ENCODE measurements at regions of chr3 and their contacts with region 1.

Region 1: DNA sequence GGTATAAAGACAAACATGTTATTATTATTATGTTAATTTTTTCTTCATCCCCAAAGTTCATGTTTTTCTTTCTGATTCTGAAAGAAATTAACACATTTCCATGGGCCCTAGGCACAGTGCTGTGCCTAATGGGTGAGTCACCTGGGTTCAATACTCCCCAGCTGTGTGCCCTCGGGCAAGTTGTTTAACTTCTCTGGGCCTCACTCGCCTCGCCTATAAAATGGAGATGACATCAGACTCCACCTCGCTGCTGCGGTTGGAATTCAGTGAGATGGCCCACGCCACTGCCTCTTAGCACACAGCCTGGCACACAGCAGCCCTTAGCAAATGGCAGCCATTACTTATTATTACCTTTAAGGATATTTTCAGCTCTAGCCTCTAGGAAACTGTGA is 22.6 kb downstream of the DNASE1L3 start:
- DNase-seq: no peak
- H3K4me3 ChIP-seq: no peak overlapping the region
- H3K4me3 Mint-ChIP-seq: no peak overlapping the region
- H3K27ac Mint-ChIP-seq: no peak overlapping the region
- H3K4me1 ChIP-seq: peaks cover 8% of the 10 kb centered on the region
- H3K4me1 Mint-ChIP-seq: peaks cover 11% of the 10 kb centered on the region
- H3K27me3 ChIP-seq: no peaks in the 10 kb centered on the region
- H3K27me3 Mint-ChIP-seq: no peaks in the 10 kb centered on the region
- CTCF ChIP-seq: no peak

Region 2: DNA sequence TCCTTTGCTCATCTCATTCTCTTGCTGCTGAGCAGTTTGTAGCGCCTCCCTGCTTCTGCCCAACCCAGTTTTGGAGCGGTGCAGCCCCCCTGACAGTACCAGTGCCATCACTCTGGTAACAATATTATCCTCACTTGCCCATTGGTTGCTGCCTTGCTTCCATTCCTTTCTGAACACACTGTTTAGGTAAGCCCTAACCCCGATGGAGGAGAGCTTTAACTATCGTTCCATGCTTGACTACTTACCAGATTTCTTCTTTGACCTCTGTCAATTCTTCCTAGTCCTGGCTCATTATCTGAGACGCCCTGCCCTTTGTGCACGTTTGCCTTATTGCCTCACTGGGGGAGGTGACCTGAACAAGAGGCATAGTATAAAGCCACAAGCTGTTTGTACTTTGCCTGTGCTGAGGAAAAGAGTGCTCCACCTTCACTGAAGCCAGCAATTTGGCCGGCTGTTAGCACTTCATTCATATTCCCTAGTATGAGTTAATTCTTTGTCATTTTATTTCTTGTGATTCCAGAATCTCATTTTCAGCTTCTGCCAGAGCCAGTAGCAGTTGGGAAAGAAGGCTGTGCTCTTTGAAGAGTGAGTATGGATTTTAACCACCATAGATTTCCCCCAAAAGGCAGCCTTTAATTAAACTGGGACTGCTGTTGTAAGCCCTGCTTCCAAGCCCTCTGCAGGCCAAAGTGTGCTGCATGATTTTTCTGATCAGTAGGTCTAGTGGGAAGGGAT is 61.4 kb after region 1 on chr3:
- CTCF ChIA-PET with region 1: interaction called, 6 read pairs
- POLR2A ChIA-PET with region 1: no interaction called
- intact Hi-C with region 1: loop called (anchors 1 kb)
- DNase-seq: peak; percentile 65 to 74
- H3K4me3 ChIP-seq: no peak overlapping the region
- H3K4me3 Mint-ChIP-seq: peak overlapping the region; percentile 61
- H3K27ac Mint-ChIP-seq: peak overlapping the region; percentile 89
- H3K4me1 ChIP-seq: peaks cover 39% of the 10 kb centered on the region
- H3K4me1 Mint-ChIP-seq: peaks cover 40% of the 10 kb centered on the region
- H3K27me3 ChIP-seq: no peaks in the 10 kb centered on the region
- H3K27me3 Mint-ChIP-seq: no peaks in the 10 kb centered on the region
- CTCF ChIP-seq: peak; percentile 17 to 33

Region 3: DNA sequence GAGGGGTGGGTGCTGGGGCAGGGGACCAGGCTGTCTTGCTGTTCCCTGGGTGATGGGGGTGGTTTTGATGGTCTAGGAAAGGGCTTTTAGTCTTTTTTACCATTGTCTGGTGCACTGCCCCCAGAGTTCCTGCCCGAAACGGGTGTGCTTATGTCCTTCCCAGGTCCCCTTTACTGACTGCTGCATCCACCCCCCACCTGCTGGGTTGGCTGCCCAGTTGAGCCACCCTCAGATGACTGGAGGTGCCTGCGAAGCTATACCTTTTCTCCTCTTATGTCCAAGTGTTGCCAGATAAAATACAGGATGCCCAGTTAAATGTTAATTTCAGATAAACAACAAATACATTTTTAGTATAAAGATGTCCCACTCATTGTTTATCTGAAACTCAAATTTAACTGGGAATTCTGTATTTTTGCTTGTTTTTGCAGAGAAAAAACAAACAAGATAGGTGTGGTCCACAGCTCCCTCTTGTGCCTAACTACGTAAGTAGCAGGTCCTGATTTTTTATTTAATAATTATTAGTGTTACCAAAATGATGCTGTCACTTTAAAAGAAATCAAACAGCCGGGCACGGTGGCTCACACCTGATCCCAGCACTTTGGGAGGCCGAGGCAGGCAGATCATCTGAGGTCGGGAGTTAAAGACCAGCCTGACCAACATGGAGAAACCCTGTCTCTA is 111.8 kb after region 1 on chr3:
- CTCF ChIA-PET with region 1: interaction called, 41 read pairs
- POLR2A ChIA-PET with region 1: no interaction called
- intact Hi-C with region 1: loop called (anchors 1 kb)
- DNase-seq: peak in 1 of 2 experiments; percentile 17
- H3K4me3 ChIP-seq: no peak overlapping the region
- H3K4me3 Mint-ChIP-seq: no peak overlapping the region
- H3K27ac Mint-ChIP-seq: no peak overlapping the region
- H3K4me1 ChIP-seq: no peaks in the 10 kb centered on the region
- H3K4me1 Mint-ChIP-seq: no peaks in the 10 kb centered on the region
- H3K27me3 ChIP-seq: no peaks in the 10 kb centered on the region
- H3K27me3 Mint-ChIP-seq: no peaks in the 10 kb centered on the region
- CTCF ChIP-seq: peak; percentile 30 to 69

Region 4: DNA sequence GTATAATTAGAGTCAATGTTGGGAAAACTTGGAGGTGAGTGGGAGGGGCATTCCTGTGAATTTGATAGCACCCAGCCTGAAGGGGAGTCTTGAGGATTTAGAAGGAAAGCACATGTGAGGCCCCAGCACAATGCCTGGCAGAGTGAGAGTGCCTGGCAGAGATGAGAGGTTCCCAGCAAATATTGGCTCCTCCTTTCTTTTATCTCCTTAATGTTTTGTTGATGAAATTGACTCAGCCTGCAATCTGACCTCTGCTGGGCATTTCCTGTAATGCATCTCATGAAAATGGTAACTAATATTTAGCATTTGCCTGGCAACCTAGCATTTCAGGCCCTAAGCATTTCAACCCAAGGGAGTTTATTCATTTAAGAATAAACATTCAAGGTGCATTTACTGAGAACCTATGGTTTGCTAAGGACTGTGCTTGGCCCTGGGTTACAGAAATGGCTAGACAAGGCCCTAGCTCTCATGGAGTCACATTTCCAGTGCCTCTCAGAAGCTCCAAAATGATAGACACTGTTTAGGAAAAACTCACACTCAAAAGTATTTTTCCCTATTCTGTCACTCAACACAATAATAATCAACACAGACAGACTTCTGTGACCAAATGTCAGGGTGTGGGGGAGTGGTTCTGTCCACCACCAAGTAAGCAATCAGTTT is 226.5 kb after region 1 on chr3:
- CTCF ChIA-PET with region 1: interaction called, 5 read pairs
- POLR2A ChIA-PET with region 1: no interaction called
- intact Hi-C with region 1: loop called (anchors 1 kb)
- DNase-seq: peak in 1 of 2 experiments; percentile 54
- H3K4me3 ChIP-seq: no peak overlapping the region
- H3K4me3 Mint-ChIP-seq: no peak overlapping the region
- H3K27ac Mint-ChIP-seq: no peak overlapping the region
- H3K4me1 ChIP-seq: peaks cover 44% of the 10 kb centered on the region
- H3K4me1 Mint-ChIP-seq: peaks cover 19% of the 10 kb centered on the region
- H3K27me3 ChIP-seq: no peaks in the 10 kb centered on the region
- H3K27me3 Mint-ChIP-seq: no peaks in the 10 kb centered on the region
- CTCF ChIP-seq: peak; percentile 71 to 74